Heart left ventricle (tissue), 16 donors: ENCODE measurements at regions of chr17 and their contacts with region 1.

Region 1: GRCh38 chr17:82993005-82993404 is 86.4 kb upstream of the METRNL start:
- DNase-seq: no peak
- ATAC-seq: no peak
- H3K4me3 ChIP-seq: no peak overlapping the region
- H3K27ac ChIP-seq: no peak overlapping the region
- H3K4me1 ChIP-seq: no peaks in the 10 kb centered on the region
- H3K27me3 ChIP-seq: no peaks in the 10 kb centered on the region
- CTCF ChIP-seq: no peak
- POLR2A ChIP-seq: no peak

Region 2: DNA sequence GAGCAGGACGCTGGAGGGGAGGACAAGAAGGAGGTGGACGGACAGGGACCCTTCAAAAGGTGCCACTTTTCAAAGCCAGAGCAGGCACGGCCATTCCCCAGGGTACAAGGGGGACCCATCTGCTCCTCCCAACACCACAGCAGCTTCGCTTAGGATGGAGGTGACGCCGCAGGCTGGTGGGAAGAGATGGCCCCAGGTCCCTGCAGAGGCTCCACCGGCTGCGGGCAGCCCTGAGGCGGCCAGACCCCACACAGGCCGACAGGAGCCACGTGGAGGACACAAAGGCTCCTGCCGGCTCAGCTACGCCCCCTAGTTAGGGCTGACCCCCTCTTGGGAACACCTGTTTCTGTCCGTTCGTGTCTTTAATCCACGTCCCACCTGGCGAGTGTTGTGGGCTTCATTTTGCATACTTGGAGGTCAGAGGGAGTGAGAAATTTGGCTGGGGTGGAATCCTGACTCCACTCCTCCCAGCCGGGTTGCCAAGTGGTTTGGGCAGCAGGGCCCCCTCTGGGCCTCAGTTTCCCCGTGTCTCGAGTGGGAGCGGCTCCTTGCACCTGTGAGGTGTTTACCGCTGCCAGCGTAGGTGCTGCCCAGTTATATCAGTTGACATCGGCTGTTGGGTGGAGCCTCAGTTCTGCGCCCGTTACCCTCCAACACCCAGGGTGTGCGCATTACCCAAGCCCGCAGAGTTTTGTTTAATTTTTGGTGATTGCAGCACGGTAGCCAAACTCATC is 282.3 kb before region 1 on chr17:
- intact Hi-C with region 1: no loop called
- DNase-seq: no peak
- ATAC-seq: no peak
- H3K4me3 ChIP-seq: no peak overlapping the region
- H3K27ac ChIP-seq: no peak overlapping the region
- H3K4me1 ChIP-seq: peaks cover 0 to 3% (median under 1%) of the 10 kb centered on the region in 12 donors
- H3K27me3 ChIP-seq: peaks cover 0 to 3% (median 0%) of the 10 kb centered on the region in 9 donors
- CTCF ChIP-seq: no peak
- POLR2A ChIP-seq: no peak

Region 3: GRCh38 chr17:82836823-82837357 is 156.1 kb before region 1 on chr17:
- intact Hi-C with region 1: no loop called
- DNase-seq: no peak
- ATAC-seq: peak in 2 of 4 donors; percentile 11 to 26
- H3K4me3 ChIP-seq: peak overlapping the region in 2 of 12 donors; percentile 0 to 7
- H3K27ac ChIP-seq: peak overlapping the region in 11 of 12 donors; percentile 12 to 76 (median 66)
- H3K4me1 ChIP-seq: peaks cover 4 to 41% (median 18%) of the 10 kb centered on the region in 12 donors
- H3K27me3 ChIP-seq: no peaks in the 10 kb centered on the region
- CTCF ChIP-seq: peak in 2 of 12 donors; percentile 18 to 30
- POLR2A ChIP-seq: no peak

Region 4: DNA sequence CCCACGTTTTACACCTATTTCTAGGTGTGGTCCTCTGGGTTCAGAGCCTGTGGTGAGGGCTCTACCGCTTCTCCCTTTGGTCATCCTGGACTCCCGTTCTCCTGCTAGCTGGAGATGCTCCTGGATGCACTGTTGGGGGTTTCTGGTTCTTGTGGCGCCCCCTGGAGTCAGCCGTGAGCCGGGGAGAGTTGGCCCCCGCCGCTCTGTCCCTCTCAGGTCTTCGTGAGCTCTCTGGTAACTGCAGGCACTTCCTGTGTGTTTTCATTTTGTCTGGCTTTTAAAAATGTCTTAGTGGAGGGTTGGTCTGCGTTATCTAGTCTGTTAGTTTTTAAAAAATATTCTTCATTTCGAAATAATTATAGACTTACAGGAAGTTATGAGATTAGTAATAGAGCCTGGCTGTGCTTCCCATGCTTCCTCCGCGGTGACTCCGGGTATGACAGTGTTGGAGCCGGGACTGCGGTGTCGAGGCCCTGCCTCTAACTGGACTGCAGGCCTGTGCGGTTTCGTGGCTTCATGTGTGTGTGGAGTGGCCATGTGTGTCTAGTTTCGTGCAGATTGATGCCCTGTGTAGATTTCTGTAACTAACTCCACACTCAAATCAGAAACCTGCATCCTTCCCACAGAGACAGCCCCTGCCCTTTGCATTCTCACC is 75.2 kb before region 1 on chr17:
- intact Hi-C with region 1: no loop called
- DNase-seq: peak in 1 of 5 donors; percentile 26
- ATAC-seq: peak in 1 of 4 donors; percentile 31
- H3K4me3 ChIP-seq: no peak overlapping the region
- H3K27ac ChIP-seq: no peak overlapping the region
- H3K4me1 ChIP-seq: peaks cover 0 to 15% (median 4%) of the 10 kb centered on the region in 12 donors
- H3K27me3 ChIP-seq: no peaks in the 10 kb centered on the region
- CTCF ChIP-seq: peak in 10 of 12 donors; percentile 11 to 57 (median 46)
- POLR2A ChIP-seq: no peak

Region 5: GRCh38 chr17:83041305-83041704 is 48.3 kb after region 1 on chr17:
- intact Hi-C with region 1: loop called in 1 of 10 experiments (anchors 10 kb)
- DNase-seq: no peak
- ATAC-seq: no peak
- H3K4me3 ChIP-seq: no peak overlapping the region
- H3K27ac ChIP-seq: no peak overlapping the region
- H3K4me1 ChIP-seq: no peaks in the 10 kb centered on the region
- H3K27me3 ChIP-seq: no peaks in the 10 kb centered on the region
- CTCF ChIP-seq: no peak
- POLR2A ChIP-seq: no peak